ENCODE measurements at regions of chr22 and their contacts with region 1.

Region 1: DNA sequence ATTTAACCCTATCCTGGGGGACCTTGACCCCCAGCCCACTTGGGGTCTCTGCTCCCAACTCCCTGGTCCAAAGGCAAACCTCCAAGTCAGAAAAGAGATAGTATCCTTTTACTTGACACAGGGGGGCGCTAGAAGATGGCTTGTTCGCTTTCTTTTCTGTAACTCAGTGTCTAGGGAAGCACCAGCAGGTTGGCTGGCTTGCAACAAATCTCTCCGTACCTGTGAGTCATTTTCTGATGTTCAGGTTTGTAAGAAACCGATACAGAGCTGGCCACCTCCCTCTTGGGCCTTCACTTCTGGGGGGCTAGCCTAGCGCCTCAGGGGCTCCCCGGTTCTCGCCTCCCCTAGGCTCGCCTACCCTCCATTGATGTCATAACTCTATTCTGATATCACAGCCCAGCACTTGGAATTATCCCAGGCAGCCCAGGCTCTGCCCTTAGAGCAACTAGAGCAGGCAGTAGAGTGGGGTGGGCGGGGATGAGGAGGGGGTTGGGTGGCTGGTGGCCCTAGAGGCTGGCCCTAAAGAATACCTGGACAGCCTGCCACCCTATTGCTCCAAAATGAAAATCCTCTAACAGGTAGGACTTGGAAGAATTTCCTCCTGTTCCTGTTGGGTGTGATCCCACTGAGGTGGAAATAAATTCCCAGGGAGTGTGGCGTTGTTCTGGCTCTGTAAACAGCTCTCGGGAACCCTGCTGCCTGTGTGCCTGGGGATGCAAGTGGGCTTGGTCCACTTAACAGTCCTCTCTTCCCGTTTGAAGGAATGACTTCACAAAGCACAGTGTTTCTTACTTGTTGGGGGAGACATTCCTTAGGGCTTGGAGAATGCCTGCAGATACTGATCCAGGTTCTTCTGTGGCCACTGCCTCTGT is 69.4 kb downstream of the OSBP2 start:
- DNase-seq: no peak
- H3K4me3 ChIP-seq: no peak overlapping the region
- H3K27ac ChIP-seq: no peak overlapping the region
- H3K4me1 ChIP-seq: no peaks in the 10 kb centered on the region
- H3K27me3 ChIP-seq: no peaks in the 10 kb centered on the region
- CTCF ChIP-seq: peak; percentile 40 to 54 (median 51)
- EP300 ChIP-seq: no peak
- POLR2A ChIP-seq: no peak

Region 2: GRCh38 chr22:30743257-30744020 is 20.6 kb before region 1 on chr22:
- intact Hi-C with region 1: no loop called
- DNase-seq: no peak
- H3K4me3 ChIP-seq: no peak overlapping the region
- H3K27ac ChIP-seq: no peak overlapping the region
- H3K4me1 ChIP-seq: no peaks in the 10 kb centered on the region
- H3K27me3 ChIP-seq: no peaks in the 10 kb centered on the region
- CTCF ChIP-seq: no peak
- EP300 ChIP-seq: no peak
- POLR2A ChIP-seq: no peak

Region 3: GRCh38 chr22:30876915-30877553 is 113.0 kb after region 1 on chr22:
- intact Hi-C with region 1: no loop called
- DNase-seq: no peak
- H3K4me3 ChIP-seq: no peak overlapping the region
- H3K27ac ChIP-seq: no peak overlapping the region
- H3K4me1 ChIP-seq: peaks cover 0 to 12% (median 0%) of the 10 kb centered on the region in 4 donors
- H3K27me3 ChIP-seq: no peaks in the 10 kb centered on the region
- CTCF ChIP-seq: no peak
- EP300 ChIP-seq: no peak
- POLR2A ChIP-seq: no peak

Region 4: DNA sequence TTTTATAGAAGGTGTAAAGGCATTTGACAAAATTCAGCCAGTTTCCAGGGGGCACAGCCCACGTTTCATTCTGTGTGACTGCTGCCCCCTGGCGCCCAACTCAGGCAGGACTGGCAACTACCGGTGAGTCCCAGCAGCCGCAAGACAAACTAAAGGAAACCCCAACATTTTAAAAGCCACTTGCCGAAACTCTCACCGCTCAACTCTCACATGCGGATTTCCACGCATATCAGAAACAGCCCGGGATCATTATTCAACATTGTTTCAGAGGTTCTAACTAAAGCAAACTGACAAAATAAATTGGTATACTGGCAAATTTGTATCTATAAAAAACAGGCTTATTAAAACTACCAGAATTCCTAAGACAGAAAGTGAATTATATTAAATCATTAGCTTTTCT is 156.4 kb after region 1 on chr22:
- intact Hi-C with region 1: loop called (anchors 2 kb)
- DNase-seq: peak; percentile 95
- H3K4me3 ChIP-seq: peak overlapping the region in 1 of 4 donors; percentile 25
- H3K27ac ChIP-seq: no peak overlapping the region
- H3K4me1 ChIP-seq: peaks cover 8 to 18% (median 15%) of the 10 kb centered on the region in 4 donors
- H3K27me3 ChIP-seq: no peaks in the 10 kb centered on the region
- CTCF ChIP-seq: peak; percentile 82 to 93 (median 90)
- EP300 ChIP-seq: no peak
- POLR2A ChIP-seq: no peak

Measured in esophagus muscularis mucosa (tissue), 4 donors.